SK-N-SH (cell line): ENCODE measurements at regions of chr22 and their contacts with region 1.

Region 1: GRCh38 chr22:45863981-45864751 is 112.8 kb downstream of the WNT7B start:
- DNase-seq: peak; percentile 87
- H3K4me3 ChIP-seq: peak overlapping the region in 1 of 2 experiments; percentile 29; a peak in 1 of 4 replicates
- H3K27ac ChIP-seq: no peak overlapping the region
- H3K4me1 ChIP-seq: no peaks in the 10 kb centered on the region
- H3K27me3 ChIP-seq: no peaks in the 10 kb centered on the region
- CTCF ChIP-seq: peak; percentile 84
- EP300 ChIP-seq: no peak
- RAD21 ChIP-seq: peak; percentile 67

Region 2: DNA sequence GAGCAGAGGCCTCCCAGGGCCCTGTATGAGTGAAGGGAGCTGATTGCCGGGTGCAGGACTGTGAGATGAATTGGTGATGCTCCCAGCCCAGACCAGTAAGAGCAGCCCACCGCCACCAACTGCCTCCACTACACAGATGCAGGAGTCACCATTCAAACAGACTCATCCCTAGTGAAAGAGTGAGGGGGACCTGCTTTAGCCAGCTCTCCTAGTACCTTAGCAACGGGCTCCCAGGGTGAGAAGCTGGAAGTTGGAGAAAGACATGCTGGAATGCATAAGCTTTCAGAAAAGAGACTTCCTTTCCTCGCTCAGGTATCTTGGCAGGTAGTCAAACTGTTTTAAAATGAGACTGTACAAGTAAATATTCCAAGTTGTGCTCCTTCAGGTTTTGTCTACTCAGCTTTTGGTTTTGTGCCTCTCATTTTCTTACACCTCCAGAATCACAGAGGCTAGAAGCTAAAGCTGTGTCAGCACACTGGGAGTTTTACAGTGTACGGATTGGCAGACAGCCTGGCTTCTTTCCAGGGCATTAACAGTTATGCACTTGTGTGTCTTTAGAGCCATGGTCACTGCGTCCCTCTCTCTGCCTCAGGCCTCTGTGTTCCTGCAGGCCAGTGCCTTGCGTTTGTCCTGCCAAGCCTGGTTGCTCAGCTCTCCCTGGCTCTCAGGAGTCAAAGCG is 46.3 kb before region 1 on chr22:
- CTCF ChIA-PET with region 1: interaction called, 11 read pairs
- POLR2A ChIA-PET with region 1: no interaction called
- DNase-seq: peak; percentile 44
- H3K4me3 ChIP-seq: no peak overlapping the region
- H3K27ac ChIP-seq: peak overlapping the region in 1 of 2 experiments; percentile 59; a peak in 2 of 4 replicates
- H3K4me1 ChIP-seq: peaks cover 0 to 23% of the 10 kb centered on the region in 2 experiments; a peak in 1 of 4 replicates
- H3K27me3 ChIP-seq: no peaks in the 10 kb centered on the region
- CTCF ChIP-seq: no peak
- EP300 ChIP-seq: peak in 1 of 2 experiments; percentile 16; a peak in 1 of 4 replicates
- RAD21 ChIP-seq: no peak

Region 3: DNA sequence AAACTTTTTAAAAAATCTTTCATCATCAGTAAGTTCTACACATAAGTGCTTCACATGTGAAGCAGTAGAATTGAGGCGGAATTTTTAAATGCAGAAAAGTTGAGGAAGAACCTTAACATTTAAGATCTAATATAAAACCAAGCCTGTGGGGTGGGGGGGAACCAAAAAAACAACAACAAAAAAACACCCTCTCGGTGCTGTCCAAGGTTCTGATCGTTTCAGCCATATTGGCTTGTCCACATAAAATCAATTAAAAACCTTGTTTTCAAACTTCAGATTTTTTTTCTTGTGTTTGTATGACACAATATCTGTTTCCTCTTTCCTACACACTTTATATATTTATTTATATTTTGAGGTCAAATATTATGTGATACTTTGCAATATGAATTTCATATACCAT is 17.2 kb before region 1 on chr22:
- CTCF ChIA-PET with region 1: interaction called, 19 read pairs
- POLR2A ChIA-PET with region 1: no interaction called
- DNase-seq: no peak
- H3K4me3 ChIP-seq: no peak overlapping the region
- H3K27ac ChIP-seq: no peak overlapping the region
- H3K4me1 ChIP-seq: no peaks in the 10 kb centered on the region; a peak in 1 of 4 replicates
- H3K27me3 ChIP-seq: no peaks in the 10 kb centered on the region
- CTCF ChIP-seq: no peak
- EP300 ChIP-seq: no peak
- RAD21 ChIP-seq: no peak

Region 4: GRCh38 chr22:45878051-45878781 is 14.1 kb after region 1 on chr22:
- CTCF ChIA-PET with region 1: interaction called, 21 read pairs
- POLR2A ChIA-PET with region 1: no interaction called
- DNase-seq: no peak
- H3K4me3 ChIP-seq: no peak overlapping the region
- H3K27ac ChIP-seq: no peak overlapping the region
- H3K4me1 ChIP-seq: no peaks in the 10 kb centered on the region; a peak in 1 of 4 replicates
- H3K27me3 ChIP-seq: no peaks in the 10 kb centered on the region
- CTCF ChIP-seq: no peak
- EP300 ChIP-seq: no peak
- RAD21 ChIP-seq: no peak

Region 5: GRCh38 chr22:46068593-46069491 is 204.7 kb after region 1 on chr22:
- CTCF ChIA-PET with region 1: no interaction called
- POLR2A ChIA-PET with region 1: no interaction called
- DNase-seq: no peak
- H3K4me3 ChIP-seq: peak overlapping the region; percentile 69 to 92
- H3K27ac ChIP-seq: peak overlapping the region; percentile 100
- H3K4me1 ChIP-seq: peaks cover 18 to 34% of the 10 kb centered on the region in 2 experiments; a peak in 3 of 4 replicates
- H3K27me3 ChIP-seq: no peaks in the 10 kb centered on the region
- CTCF ChIP-seq: no peak
- EP300 ChIP-seq: peak in 1 of 2 experiments; percentile 72; a peak in 1 of 4 replicates
- RAD21 ChIP-seq: no peak